ENCODE measurements at regions of chr2 and their contacts with region 1.

Region 1: GRCh38 chr2:80080957-80081356 is 223.6 kb downstream of the LRRTM1 start:
- DNase-seq: no peak
- ATAC-seq: peak; percentile 43; the same call in 1 of the 2 replicates
- H3K4me3 ChIP-seq: peak overlapping the region; percentile 27
- H3K27ac ChIP-seq: no peak overlapping the region
- H3K4me1 ChIP-seq: no peaks in the 10 kb centered on the region; the same call in 1 of the 2 replicates
- H3K27me3 ChIP-seq: no peaks in the 10 kb centered on the region
- CTCF ChIP-seq: no peak
- POLR2A ChIP-seq: no peak
- RAD21 ChIP-seq: no peak

Region 2: DNA sequence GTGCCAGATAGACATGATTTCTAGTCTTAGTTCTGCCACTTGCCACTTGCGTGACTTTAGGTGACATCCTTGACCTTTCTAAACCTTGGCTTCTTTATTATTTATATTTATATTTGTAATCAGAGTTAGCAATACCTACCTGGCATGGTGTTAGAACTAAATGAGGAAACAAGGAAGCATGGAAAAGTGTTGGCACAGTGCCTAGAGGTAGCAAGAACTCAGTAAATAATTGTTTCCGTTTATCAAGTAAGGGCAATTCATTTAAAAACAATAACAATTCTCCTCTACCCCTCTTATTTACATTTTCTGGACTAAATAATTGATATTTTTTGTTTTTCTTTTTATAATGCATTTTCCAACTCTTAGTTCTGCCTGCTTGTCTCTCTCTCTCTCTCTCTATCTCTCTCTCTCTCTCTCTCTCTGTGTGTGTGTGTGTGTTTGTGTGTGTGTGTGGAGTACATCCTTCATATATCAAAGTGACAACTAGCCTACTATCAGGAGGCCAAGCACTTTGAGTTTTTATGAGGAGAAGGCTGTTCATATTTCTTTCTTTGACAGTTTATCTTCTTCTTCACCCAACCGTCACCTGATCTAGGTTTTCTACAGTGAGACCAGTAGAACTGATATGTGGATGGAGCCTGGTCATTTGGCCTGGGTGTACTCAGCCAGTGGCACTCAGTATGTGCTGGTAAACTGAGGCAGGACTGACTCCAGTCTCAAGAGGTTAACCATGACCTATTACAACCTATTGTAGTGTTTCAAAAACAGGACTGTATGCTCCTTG is 89.0 kb after region 1 on chr2:
- CTCF ChIA-PET with region 1: no interaction called
- POLR2A ChIA-PET with region 1: no interaction called
- dilution Hi-C with region 1: no loop called
- in situ Hi-C with region 1: no loop called
- intact Hi-C with region 1: loop called (anchors 5 kb)
- DNase-seq: no peak
- ATAC-seq: no peak
- H3K4me3 ChIP-seq: no peak overlapping the region
- H3K27ac ChIP-seq: no peak overlapping the region
- H3K4me1 ChIP-seq: no peaks in the 10 kb centered on the region
- H3K27me3 ChIP-seq: no peaks in the 10 kb centered on the region
- CTCF ChIP-seq: no peak
- POLR2A ChIP-seq: no peak
- RAD21 ChIP-seq: no peak